Sciatic nerve (tissue), 2 donors: ENCODE measurements at regions of chr20 and their contacts with region 1.

Region 1: DNA sequence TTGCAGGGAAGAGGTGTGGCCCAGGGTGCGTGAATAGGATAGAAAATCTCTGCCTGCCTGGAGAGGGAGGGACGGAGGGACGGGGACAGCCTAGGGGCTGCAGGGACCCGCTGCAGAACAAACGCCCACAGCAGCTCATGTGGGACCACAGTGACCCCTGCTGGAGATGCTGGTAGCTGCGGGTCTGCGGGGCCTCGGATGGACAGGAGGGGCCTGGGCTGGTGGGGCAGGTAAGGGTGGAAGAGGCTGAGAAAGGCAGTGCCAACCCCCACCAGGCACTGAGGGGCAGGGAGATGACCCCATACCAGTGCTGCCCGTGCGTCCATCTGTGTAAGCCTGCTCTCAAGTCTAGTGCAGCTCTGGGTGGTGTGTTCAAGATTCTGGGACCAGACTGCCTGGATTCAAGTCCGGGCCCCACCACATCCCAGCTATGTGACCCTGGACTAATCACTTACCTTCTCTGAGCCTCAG is 39.4 kb downstream of the KIAA1755 start:
- DNase-seq: peak; percentile 84
- ATAC-seq: peak; percentile 73

Region 2: GRCh38 chr20:37896932-37897548 is 324.1 kb before region 1 on chr20:
- intact Hi-C with region 1: no loop called
- DNase-seq: no peak
- ATAC-seq: peak; percentile 65

Region 3: DNA sequence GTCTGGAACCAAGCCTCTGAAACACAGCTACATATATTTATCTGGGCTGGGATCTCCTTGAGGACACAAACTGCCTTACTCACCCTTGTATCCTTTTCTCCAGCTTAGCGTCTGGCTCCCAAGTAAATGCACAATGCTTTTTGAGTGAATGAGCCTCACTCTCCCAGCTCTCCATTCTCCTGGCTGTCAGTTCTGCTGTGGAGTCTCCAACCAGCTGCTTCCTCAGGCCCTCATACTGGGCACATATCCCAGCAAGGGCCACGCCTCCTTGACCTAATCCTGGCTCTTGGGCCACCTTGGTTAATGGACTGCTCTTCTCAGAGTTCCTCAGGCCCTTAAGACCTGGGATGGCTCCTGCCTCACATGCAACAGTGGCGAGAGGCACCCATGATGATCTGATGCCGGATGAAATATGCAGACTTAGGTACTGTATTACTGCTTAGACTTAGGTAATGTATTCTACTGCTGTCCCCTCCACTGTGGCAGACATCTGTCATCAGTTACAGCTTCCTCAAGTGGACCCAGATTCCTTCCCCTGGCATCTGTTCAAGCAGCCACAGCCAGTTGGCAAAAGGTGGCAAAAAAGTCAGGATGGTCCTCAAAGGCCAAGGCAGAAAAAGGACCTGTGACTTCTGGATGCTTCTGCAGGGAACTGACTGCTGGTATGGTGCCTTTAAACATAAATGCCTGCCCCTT is 197.5 kb after region 1 on chr20:
- intact Hi-C with region 1: loop called (anchors 10 kb)
- DNase-seq: peak; percentile 68
- ATAC-seq: peak; percentile 83